IMR-90 (cell line): ENCODE measurements at regions of chr1 and their contacts with region 1.

Region 1: DNA sequence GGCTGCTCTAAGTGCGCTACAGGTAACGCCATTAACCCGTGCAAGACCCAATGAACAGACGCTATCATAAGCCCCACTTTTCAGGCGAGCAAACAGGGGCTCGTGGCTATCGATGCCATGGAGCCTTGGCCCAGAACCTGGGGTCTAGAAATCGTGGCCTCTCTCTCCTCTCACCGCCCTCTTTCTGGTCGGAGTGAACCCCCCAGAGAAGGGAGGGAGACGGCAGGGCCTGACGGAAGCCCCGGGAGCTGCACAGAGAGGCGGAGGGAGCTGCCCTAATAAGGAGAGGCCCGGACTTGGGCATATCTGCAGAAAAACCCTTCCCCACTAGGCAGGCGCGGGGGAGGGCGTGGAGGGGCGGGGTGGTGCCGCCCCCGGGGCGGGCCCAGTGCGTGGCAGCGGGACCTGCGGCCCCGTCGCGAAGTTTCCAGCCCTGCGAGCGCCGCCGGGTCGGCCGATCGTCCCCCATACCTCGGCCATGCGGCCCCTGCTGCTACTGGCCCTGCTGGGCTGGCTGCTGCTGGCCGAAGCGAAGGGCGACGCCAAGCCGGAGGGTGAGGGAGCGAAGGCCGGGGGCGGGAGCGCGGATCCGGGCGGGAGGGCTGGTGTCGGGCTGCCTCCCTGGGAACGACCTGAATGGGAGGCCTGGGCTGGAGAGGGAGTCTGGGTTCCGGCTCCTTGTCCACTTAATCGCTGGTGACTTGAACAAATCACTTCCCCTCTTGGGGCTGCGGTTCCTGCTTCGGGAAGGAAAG is at the start of gene PLOD1:
- DNase-seq: peak; percentile 84
- ATAC-seq: peak; percentile 97
- H3K4me3 ChIP-seq: peak within 1 kb of the TSS; percentile 82
- H3K27ac ChIP-seq: peak within 1 kb of the TSS; percentile 95
- H3K4me1 ChIP-seq: peaks cover 31% of the 10 kb centered on the region
- H3K27me3 ChIP-seq: no peaks in the 10 kb centered on the region
- CTCF ChIP-seq: no peak
- POLR2A ChIP-seq: peak; percentile 63
- RAD21 ChIP-seq: no peak
- total RNA-seq, gene PLOD1: 236 and 283 TPM in 2 replicates

Region 2: DNA sequence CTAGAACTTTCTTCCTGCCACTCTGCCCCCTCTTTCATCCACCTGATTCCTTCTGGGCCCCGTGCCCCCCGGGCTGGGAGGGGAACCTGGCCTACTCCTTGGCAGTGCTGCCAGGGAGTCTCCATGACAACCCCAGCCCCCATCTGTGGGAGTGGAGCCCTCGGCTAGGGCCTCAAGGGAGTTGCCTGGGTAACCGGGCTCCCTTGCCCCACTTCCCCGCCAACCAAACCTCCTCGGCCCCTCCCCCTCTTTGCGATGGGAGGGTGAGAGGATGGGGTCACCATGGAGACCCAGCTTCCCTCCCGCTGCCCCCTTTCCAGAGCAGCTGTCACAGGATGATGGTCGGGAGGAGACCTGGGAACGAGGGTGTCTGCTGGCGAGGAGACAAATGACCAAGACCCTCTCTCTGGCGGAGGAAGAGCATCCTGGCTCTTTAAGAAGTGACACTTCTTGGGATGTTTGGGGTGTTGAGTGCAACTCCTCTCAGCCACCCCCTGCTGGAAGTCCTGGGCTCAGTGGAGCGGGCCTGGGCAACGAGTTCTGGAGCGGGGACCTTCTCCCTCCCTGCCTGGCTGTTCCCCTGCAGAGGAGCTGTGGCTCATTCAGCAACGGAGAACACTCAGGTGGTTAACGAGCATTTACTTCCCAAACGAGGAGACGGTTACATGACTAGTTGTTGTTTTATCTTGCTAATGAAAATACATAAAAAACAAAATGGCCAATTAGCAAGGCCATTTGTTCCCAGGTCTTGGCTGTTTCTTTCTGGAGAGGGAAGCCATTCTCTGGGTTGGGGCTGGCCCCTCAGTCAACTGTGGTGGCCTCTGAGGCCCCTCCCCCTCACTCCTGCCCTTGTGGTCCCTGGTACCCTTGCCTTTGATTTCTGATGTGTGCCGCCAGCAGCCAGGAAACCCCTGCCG is 578.7 kb before region 1 on chr1:
- CTCF ChIA-PET with region 1: no interaction called
- POLR2A ChIA-PET with region 1: no interaction called
- dilution Hi-C with region 1: no loop called
- in situ Hi-C with region 1: no loop called
- intact Hi-C with region 1: no loop called
- DNase-seq: no peak
- ATAC-seq: no peak
- H3K4me3 ChIP-seq: no peak overlapping the region
- H3K27ac ChIP-seq: no peak overlapping the region
- H3K4me1 ChIP-seq: no peaks in the 10 kb centered on the region
- H3K27me3 ChIP-seq: peaks cover 32% of the 10 kb centered on the region
- CTCF ChIP-seq: no peak
- POLR2A ChIP-seq: no peak
- RAD21 ChIP-seq: no peak

Region 3: GRCh38 chr1:11784993-11785769 is 149.3 kb before region 1 on chr1:
- CTCF ChIA-PET with region 1: no interaction called
- POLR2A ChIA-PET with region 1: no interaction called
- dilution Hi-C with region 1: no loop called
- in situ Hi-C with region 1: no loop called
- intact Hi-C with region 1: no loop called
- DNase-seq: peak; percentile 21
- ATAC-seq: peak; percentile 68
- H3K4me3 ChIP-seq: no peak overlapping the region
- H3K27ac ChIP-seq: no peak overlapping the region
- H3K4me1 ChIP-seq: peaks cover 20% of the 10 kb centered on the region
- H3K27me3 ChIP-seq: no peaks in the 10 kb centered on the region; the same call in 1 of the 2 replicates
- CTCF ChIP-seq: peak; percentile 60
- POLR2A ChIP-seq: no peak
- RAD21 ChIP-seq: peak; percentile 48

Region 4: GRCh38 chr1:11979851-11980675 is 45.6 kb after region 1 on chr1 and contains the start of gene MFN2:
- CTCF ChIA-PET with region 1: no interaction called
- POLR2A ChIA-PET with region 1: no interaction called
- dilution Hi-C with region 1: no loop called
- in situ Hi-C with region 1: no loop called
- intact Hi-C with region 1: loop called (anchors 2 kb)
- DNase-seq: peak; percentile 97
- ATAC-seq: peak; percentile 95
- H3K4me3 ChIP-seq: peak within 1 kb of the TSS; percentile 72
- H3K27ac ChIP-seq: peak within 1 kb of the TSS; percentile 60
- H3K4me1 ChIP-seq: peaks cover 5% of the 10 kb centered on the region
- H3K27me3 ChIP-seq: no peaks in the 10 kb centered on the region
- CTCF ChIP-seq: 0 out of 2 replicates have a peak, but pooled peaks have one; percentile 1
- POLR2A ChIP-seq: peak; percentile 66
- RAD21 ChIP-seq: no peak
- total RNA-seq, gene MFN2: 76.4 and 84.2 TPM in 2 replicates